ENCODE measurements at regions of chr7 and their contacts with region 1.

Region 1: GRCh38 chr7:66628361-66629140 is at the start of gene KCTD7:
- DNase-seq: peak; percentile 94 to 97 (median 95)
- H3K4me3 ChIP-seq: peak within 1 kb of the TSS; percentile 77 to 89
- H3K4me3 Mint-ChIP-seq: peak within 1 kb of the TSS; percentile 87 to 92 (median 91)
- H3K27ac ChIP-seq: peak within 1 kb of the TSS; percentile 89
- H3K27ac Mint-ChIP-seq: peak within 1 kb of the TSS; percentile 87 to 95 (median 93)
- H3K4me1 ChIP-seq: peaks cover 41% of the 10 kb centered on the region
- H3K4me1 Mint-ChIP-seq: peaks cover 36 to 46% (median 39%) of the 10 kb centered on the region in 4 donors
- H3K27me3 ChIP-seq: no peaks in the 10 kb centered on the region
- H3K27me3 Mint-ChIP-seq: no peaks in the 10 kb centered on the region
- total RNA-seq, gene KCTD7: 57.3 to 63.8 TPM

Region 2: DNA sequence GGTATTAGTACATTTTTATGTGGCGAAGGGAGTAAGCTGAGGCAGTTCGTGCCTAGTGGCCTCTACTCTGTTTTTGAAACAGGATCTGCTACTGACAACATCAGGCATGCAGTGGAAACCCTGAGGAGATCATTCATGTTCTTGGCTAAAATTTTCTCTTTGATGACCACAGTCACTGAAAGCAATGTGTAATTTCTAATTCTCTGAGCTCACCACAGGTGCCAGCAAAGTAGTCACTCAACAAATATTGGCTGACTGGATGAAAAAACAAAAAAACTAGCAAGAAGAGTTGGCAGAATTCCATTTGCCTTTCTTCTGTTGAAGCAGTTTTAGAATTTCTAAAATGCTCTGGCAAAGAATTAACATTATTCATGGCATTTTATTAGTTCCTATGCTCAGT is 176.4 kb before region 1 on chr7:
- CTCF ChIA-PET with region 1: no interaction called
- POLR2A ChIA-PET with region 1: no interaction called
- intact Hi-C with region 1: no loop called
- DNase-seq: no peak
- H3K4me3 ChIP-seq: no peak overlapping the region
- H3K4me3 Mint-ChIP-seq: no peak overlapping the region
- H3K27ac ChIP-seq: no peak overlapping the region
- H3K27ac Mint-ChIP-seq: no peak overlapping the region
- H3K4me1 ChIP-seq: no peaks in the 10 kb centered on the region
- H3K4me1 Mint-ChIP-seq: no peaks in the 10 kb centered on the region
- H3K27me3 ChIP-seq: no peaks in the 10 kb centered on the region
- H3K27me3 Mint-ChIP-seq: no peaks in the 10 kb centered on the region

Region 3: DNA sequence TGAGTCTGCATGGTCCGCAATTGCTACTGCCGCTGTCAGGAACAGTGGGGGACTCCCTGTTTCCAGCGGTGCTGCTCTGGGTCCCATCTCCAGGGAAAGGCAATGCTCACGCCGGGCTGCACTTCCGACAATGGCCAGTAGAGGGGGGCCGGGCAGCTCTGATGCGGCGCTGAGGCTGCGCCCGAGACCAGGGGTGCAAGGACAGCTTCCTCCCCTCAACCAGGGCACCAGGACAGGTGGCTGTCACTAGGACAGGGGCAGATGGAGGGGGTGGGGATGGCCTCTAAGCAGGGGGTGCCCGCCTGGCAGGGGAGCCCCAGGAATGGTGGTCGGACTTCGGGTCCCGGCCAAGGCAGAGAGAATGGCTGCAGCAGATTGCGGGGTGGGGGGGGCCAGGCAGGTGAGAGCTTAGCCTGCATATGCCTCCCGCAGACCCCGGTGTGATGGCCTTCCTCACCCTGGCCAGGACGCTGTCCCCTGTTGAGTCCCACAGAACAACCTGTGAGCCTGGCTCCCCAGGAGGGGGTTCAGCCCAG is 70.9 kb before region 1 on chr7:
- CTCF ChIA-PET with region 1: interaction called, 10 read pairs
- POLR2A ChIA-PET with region 1: interaction called, 8 read pairs
- intact Hi-C with region 1: no loop called
- DNase-seq: peak; percentile 60 to 73 (median 64)
- H3K4me3 ChIP-seq: no peak overlapping the region
- H3K4me3 Mint-ChIP-seq: no peak overlapping the region
- H3K27ac ChIP-seq: no peak overlapping the region
- H3K27ac Mint-ChIP-seq: peak overlapping the region in 3 of 7 donors; percentile 30 to 78 (median 57)
- H3K4me1 ChIP-seq: no peaks in the 10 kb centered on the region
- H3K4me1 Mint-ChIP-seq: peaks cover 5 to 18% (median 7%) of the 10 kb centered on the region in 4 donors
- H3K27me3 ChIP-seq: no peaks in the 10 kb centered on the region
- H3K27me3 Mint-ChIP-seq: no peaks in the 10 kb centered on the region

Region 4: DNA sequence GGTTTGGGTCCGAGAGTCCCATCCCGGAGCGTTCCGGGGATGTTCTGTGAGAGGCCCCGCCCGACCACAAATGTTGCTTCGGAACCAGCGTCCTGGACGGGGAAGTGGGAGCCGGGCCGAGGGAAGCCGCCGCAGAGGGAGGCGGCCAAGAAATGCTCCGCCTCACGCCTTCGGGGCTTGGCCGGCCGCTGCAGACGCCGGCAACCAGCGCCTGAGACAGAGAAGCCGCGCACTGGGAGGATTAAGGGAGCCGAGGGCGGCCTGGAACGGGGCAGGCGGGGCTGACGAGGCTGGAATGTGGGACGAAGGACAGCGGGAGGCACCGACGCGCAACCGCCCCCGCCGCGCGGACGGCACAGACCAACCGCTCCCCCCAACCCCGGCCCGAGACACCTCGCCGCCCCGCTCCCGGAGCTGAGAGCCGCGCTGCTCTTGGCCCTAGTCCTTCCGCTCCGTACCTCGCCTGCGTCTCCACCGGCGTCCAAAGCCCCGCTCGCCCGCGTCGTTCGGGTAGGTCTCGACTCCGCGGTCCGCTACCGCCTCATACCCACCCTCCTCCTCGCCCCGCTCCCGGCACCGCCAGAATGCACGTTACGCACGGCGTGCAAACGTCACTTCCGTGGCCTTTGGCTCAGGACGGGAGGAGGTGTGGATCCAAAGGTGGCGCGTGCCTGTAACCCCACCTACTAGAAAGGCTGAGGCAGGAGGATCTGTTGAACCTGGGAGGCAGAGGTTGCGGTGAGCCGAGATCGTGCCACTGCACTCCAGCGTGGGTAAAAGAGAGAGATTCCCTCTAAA is 36.6 kb before region 1 on chr7:
- CTCF ChIA-PET with region 1: no interaction called
- POLR2A ChIA-PET with region 1: interaction called, 15 read pairs
- intact Hi-C with region 1: loop called (anchors 1 kb)
- DNase-seq: peak; percentile 85 to 93 (median 88)
- H3K4me3 ChIP-seq: peak overlapping the region; percentile 57 to 94
- H3K4me3 Mint-ChIP-seq: peak overlapping the region; percentile 96 to 99 (median 97)
- H3K27ac ChIP-seq: peak overlapping the region; percentile 80
- H3K27ac Mint-ChIP-seq: peak overlapping the region; percentile 95 to 99 (median 98)
- H3K4me1 ChIP-seq: peaks cover 48% of the 10 kb centered on the region
- H3K4me1 Mint-ChIP-seq: peaks cover 31 to 61% (median 46%) of the 10 kb centered on the region in 4 donors
- H3K27me3 ChIP-seq: no peaks in the 10 kb centered on the region
- H3K27me3 Mint-ChIP-seq: no peaks in the 10 kb centered on the region

Region 5: DNA sequence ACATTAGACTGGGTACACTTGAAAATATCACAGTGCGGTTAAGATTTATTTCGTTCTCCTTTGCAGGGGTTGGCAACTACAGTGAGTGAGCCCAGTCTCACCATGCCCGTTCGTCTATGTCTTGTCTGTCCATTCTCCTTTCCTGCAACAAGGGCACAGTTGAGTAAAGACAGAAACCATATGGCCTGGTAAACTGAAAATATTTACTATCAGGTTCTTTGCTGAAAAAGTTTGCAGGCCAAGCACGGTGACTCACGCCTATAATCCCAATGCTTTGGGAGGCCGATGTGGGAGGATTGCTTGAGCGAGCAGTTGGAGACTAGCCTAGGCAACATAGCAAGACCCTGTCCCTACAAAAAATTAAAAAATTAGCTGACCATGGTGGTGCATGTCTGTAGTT is 11.3 kb before region 1 on chr7:
- CTCF ChIA-PET with region 1: no interaction called
- POLR2A ChIA-PET with region 1: interaction called, 10 read pairs
- intact Hi-C with region 1: no loop called
- DNase-seq: no peak
- H3K4me3 ChIP-seq: no peak overlapping the region
- H3K4me3 Mint-ChIP-seq: no peak overlapping the region
- H3K27ac ChIP-seq: no peak overlapping the region
- H3K27ac Mint-ChIP-seq: no peak overlapping the region
- H3K4me1 ChIP-seq: no peaks in the 10 kb centered on the region
- H3K4me1 Mint-ChIP-seq: no peaks in the 10 kb centered on the region
- H3K27me3 ChIP-seq: no peaks in the 10 kb centered on the region
- H3K27me3 Mint-ChIP-seq: no peaks in the 10 kb centered on the region

Region 6: DNA sequence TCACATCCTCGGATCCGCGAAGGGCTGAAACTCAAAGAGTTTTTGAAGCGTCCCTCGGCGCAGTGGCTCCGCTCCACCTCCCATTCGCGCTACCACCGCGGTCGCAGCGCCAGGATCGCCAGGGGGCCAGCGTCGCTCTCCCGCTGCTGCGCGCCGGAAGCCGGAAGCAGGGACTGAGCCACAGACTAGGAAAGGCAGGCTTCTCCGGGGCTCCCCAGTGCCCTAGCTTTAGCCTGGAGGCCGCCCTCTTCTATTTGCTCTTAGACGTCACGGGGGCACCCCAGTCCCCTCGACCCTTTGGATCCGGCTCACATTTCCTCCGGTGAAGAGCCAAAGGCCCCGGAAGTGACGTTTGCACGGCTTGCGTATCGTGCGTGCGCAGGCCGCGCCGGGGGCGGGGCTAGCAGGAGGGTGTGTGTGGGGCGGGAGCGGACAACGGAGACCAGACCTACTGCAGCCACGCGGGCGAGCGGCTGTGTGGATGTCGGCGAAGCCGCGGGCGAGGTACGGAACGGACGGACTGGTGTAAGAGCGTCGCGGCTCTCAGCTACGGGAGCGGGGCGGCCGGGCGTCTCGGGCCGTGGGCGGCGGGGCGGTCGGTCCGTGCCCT is 25.7 kb after region 1 on chr7:
- CTCF ChIA-PET with region 1: interaction called, 4 read pairs
- POLR2A ChIA-PET with region 1: interaction called, 83 read pairs
- intact Hi-C with region 1: loop called (anchors 1 kb)
- DNase-seq: peak; percentile 97 to 99 (median 98)
- H3K4me3 ChIP-seq: peak overlapping the region; percentile 90 to 91
- H3K4me3 Mint-ChIP-seq: peak overlapping the region; percentile 96 to 99 (median 97)
- H3K27ac ChIP-seq: peak overlapping the region; percentile 95
- H3K27ac Mint-ChIP-seq: peak overlapping the region; percentile 99
- H3K4me1 ChIP-seq: peaks cover 17% of the 10 kb centered on the region
- H3K4me1 Mint-ChIP-seq: peaks cover 10 to 33% (median 24%) of the 10 kb centered on the region in 4 donors
- H3K27me3 ChIP-seq: no peaks in the 10 kb centered on the region
- H3K27me3 Mint-ChIP-seq: no peaks in the 10 kb centered on the region